ENCODE measurements at regions of chr9 and their contacts with region 1.

Region 1: DNA sequence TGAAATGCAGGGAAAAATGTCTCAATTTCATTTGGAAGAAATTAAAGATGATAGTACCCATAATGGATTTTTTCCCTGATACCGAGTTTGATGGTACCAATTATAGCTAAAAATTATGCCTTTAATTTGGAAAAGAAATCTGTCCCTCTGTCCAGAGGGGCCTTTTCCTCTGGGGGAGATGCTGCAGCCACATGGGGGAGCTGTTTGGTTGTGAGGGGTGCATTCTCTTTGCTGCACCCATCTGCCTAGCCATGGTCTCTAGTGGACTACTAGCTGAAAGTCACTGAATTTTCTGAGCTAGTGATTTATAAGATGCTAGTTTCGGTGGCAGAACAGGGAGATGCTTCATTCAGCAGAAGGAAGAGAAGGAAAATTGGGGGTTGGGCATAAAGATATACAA is 9.6 kb downstream of the SEC61B start:
- DNase-seq: peak; percentile 40
- CTCF ChIP-seq: peak; percentile 74

Region 2: DNA sequence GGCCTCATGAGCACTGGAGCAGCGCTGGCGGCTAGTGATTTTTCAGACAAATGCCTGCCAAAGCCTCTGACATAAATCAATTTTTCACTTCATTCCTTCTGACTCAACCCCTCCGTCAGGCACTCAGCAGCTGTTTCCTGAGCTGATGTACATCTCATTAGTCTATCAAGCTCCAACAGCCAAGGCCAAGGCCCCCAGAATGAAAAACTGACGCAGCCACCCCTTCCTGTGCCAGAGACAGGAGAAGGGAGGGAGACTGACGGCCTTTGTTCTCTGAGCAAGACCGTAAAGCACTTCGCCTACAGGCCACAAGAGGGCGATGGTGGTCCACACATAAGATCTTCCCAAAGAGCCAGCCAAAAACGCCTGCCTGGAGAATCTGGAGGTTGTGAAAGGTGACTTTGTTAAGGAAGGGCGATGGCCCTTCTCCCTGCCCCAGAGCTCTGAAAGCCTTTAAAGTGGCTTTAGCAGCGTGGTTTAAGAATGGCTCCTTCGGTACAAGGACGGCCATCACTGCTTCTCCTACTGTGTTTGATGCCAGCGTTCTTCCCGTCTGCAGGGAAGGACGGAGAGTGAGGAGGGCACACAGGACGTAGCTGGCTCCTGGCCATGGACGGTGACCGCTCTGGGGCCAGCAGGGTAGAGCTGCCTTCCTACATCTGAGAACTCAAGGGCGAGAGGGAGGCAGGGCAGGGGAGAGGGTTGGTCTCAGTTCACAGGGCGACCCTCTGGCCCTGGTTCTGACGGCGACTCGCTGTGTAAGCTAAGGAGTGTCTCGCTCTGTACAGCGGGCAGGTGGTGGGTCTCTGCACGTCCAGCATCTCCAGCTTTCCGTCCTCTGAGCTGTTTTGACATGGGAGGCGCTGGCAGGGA is 47.0 kb before region 1 on chr9:
- CTCF ChIA-PET with region 1: interaction called, 86 read pairs
- POLR2A ChIA-PET with region 1: no interaction called
- DNase-seq: peak; percentile 78
- CTCF ChIP-seq: peak; percentile 93

Region 3: DNA sequence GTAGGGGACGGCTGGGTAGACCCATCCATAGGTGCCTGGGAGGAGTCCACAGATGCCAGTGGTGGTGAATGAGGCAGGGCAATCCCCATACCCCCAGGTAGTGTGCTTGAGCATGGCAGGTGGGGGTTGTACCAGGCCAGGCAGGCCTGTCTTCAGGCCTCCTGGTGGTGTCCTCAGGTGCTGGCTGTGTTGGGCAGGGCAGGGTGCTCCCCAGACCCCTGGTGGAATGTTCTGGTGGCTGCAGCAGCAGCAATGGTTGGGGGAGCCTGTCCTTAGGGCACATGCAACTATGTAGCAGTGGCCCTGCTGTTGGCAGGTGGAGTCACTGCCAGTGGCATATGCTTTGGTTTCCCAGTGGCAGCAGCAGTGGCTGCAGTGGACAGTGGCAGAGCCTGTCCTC is 20.0 kb before region 1 on chr9:
- CTCF ChIA-PET with region 1: interaction called, 23 read pairs
- POLR2A ChIA-PET with region 1: no interaction called
- DNase-seq: no peak
- CTCF ChIP-seq: no peak

Region 4: GRCh38 chr9:99253772-99254431 is 22.2 kb after region 1 on chr9:
- CTCF ChIA-PET with region 1: interaction called, 45 read pairs
- POLR2A ChIA-PET with region 1: interaction called, 6 read pairs
- DNase-seq: peak; percentile 85
- CTCF ChIP-seq: no peak

Region 5: GRCh38 chr9:99266255-99267023 is 34.7 kb after region 1 on chr9:
- CTCF ChIA-PET with region 1: interaction called, 27 read pairs
- POLR2A ChIA-PET with region 1: interaction called, 4 read pairs
- DNase-seq: peak; percentile 64
- CTCF ChIP-seq: peak; percentile 92

Region 6: GRCh38 chr9:99353408-99353807 is 121.7 kb after region 1 on chr9:
- CTCF ChIA-PET with region 1: no interaction called
- POLR2A ChIA-PET with region 1: no interaction called
- DNase-seq: no peak
- CTCF ChIP-seq: no peak

Region 7: DNA sequence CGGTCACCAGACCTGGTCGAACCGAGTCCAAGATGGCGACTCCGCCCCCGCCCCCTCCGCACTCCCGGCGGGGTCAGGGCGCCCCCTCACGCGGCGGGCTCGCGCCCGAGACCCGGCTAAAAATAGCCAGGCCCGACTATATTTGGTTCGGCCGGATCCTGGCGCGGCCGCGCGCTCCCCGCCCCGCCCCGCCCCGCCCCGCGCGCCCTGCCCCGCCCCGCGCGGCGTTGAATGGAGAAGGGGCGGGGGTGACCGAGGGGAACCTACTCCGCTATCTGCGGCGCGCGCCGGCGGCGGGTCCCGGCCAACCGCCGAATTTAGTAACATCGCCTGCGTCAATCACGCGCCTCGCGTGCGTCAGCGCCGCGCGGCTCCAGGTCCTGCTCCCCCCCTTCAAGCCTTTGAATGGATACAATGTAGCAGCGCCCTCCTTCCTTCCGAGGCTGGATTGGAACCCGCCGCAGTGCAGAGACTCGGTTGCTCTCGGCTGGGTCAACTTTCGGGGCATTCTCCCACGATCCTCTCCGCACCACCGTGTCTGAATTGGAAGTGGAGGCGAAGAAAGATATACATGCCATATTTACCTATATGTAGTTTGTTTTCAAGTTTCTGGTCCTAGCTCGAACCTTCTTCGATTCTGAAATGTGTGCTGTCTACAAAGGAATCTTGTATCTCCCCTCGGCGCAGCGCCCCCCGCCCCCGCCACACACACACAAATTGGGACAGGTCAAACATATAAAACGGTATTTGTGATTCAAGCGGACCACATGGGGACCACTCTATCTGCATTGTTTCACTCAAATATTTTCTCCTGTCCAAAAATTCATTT is 588.4 kb after region 1 on chr9:
- CTCF ChIA-PET with region 1: interaction called, 10 read pairs
- POLR2A ChIA-PET with region 1: no interaction called
- DNase-seq: peak; percentile 89
- CTCF ChIP-seq: peak; percentile 15

Measured in GM10248 (cell line).